Esophagus squamous epithelium (tissue), 5 donors: ENCODE measurements at regions of chr7 and their contacts with region 1.

Region 1: GRCh38 chr7:135281363-135281949 is 47.8 kb downstream of the STRA8 start:
- DNase-seq: peak; percentile 20
- H3K4me3 ChIP-seq: peak overlapping the region in 1 of 4 donors; percentile 10
- H3K27ac ChIP-seq: no peak overlapping the region
- H3K4me1 ChIP-seq: peaks cover 0 to 9% (median 5%) of the 10 kb centered on the region in 3 donors
- H3K27me3 ChIP-seq: no peaks in the 10 kb centered on the region
- CTCF ChIP-seq: peak; percentile 88 to 98 (median 95)
- POLR2A ChIP-seq: no peak

Region 2: DNA sequence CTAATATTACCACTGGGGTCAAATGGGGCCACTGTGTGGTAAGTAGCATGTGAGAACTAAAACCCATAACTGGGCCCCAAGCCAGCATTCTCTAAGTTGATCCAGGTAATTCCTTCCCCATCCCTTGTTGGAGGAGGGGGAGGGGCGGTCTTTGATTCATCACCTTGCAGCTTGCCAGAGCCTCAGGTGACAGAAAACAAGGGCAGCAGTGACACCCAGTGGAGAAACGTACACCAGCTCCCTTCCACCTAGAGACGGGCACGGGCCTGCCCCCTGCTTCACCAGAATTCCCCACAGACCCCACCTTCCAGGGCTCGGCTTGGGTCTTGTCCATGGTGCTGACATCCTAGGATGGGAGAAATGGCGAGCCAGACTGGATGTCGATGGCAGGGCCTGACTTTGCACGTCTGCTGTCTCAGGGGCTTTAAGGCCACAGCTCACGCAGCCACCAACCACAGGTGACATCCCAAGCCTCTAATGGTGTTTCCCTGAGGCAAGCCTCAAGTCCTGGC is 54.2 kb after region 1 on chr7:
- intact Hi-C with region 1: loop called (anchors 5 kb)
- DNase-seq: no peak
- H3K4me3 ChIP-seq: no peak overlapping the region
- H3K27ac ChIP-seq: no peak overlapping the region
- H3K4me1 ChIP-seq: peaks cover 0 to 11% (median 0%) of the 10 kb centered on the region in 3 donors
- H3K27me3 ChIP-seq: peaks cover 0 to 5% (median 0%) of the 10 kb centered on the region in 4 donors
- CTCF ChIP-seq: peak in 5 of 6 experiments; percentile 31 to 86 (median 63)
- POLR2A ChIP-seq: no peak

Region 3: GRCh38 chr7:135558337-135558767 is 276.9 kb after region 1 on chr7:
- intact Hi-C with region 1: loop called (anchors 5 kb)
- DNase-seq: no peak
- H3K4me3 ChIP-seq: peak overlapping the region; percentile 68 to 73 (median 72)
- H3K27ac ChIP-seq: peak overlapping the region; percentile 95 to 96 (median 96)
- H3K4me1 ChIP-seq: peaks cover 0 to 41% (median 9%) of the 10 kb centered on the region in 3 donors
- H3K27me3 ChIP-seq: no peaks in the 10 kb centered on the region
- CTCF ChIP-seq: peak; percentile 44 to 67 (median 48)
- POLR2A ChIP-seq: no peak